ENCODE measurements at regions of chr3 and their contacts with region 1.

Region 1: GRCh38 chr3:133040696-133041523 is 2.7 kb downstream of the TMEM108 start:
- DNase-seq: no peak
- ATAC-seq: no peak
- H3K4me3 Mint-ChIP-seq: no peak overlapping the region
- H3K27ac Mint-ChIP-seq: no peak overlapping the region
- H3K4me1 Mint-ChIP-seq: peaks cover 8% of the 10 kb centered on the region
- H3K27me3 Mint-ChIP-seq: peaks cover 27% of the 10 kb centered on the region
- CTCF ChIP-seq: no peak

Region 2: GRCh38 chr3:131326307-131326706 is 1714.6 kb before region 1 on chr3:
- CTCF ChIA-PET with region 1: no interaction called
- POLR2A ChIA-PET with region 1: no interaction called
- intact Hi-C with region 1: loop called (anchors 5 kb)
- DNase-seq: no peak
- ATAC-seq: no peak
- H3K4me3 Mint-ChIP-seq: no peak overlapping the region
- H3K27ac Mint-ChIP-seq: no peak overlapping the region
- H3K4me1 Mint-ChIP-seq: peaks cover 6% of the 10 kb centered on the region
- H3K27me3 Mint-ChIP-seq: no peaks in the 10 kb centered on the region
- CTCF ChIP-seq: no peak

Region 3: GRCh38 chr3:133384331-133385027 is 343.6 kb after region 1 on chr3:
- CTCF ChIA-PET with region 1: no interaction called
- POLR2A ChIA-PET with region 1: no interaction called
- intact Hi-C with region 1: loop called (anchors 10 kb)
- DNase-seq: peak; percentile 22
- ATAC-seq: peak; percentile 73
- H3K4me3 Mint-ChIP-seq: no peak overlapping the region
- H3K27ac Mint-ChIP-seq: no peak overlapping the region
- H3K4me1 Mint-ChIP-seq: no peaks in the 10 kb centered on the region
- H3K27me3 Mint-ChIP-seq: peaks cover 11% of the 10 kb centered on the region
- CTCF ChIP-seq: no peak

Region 4: DNA sequence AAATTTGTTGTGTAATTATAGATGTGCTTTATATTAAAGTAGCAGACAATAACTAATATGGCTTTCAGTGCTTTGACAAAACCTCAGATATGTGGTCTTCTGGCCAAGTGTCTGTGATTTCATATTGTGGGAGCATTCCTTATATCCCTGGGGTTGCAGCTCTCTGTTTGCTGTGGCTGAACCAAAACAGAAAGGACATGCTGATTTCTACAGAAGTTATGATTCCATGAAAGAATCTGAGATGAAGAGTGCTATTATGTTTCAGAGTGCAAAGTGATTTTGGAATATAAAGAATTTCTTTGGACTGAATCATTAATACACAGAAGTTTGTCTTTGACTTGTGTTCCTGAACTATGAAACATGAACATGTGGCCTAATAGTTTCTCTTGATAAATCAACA is 569.1 kb after region 1 on chr3:
- CTCF ChIA-PET with region 1: no interaction called
- POLR2A ChIA-PET with region 1: no interaction called
- intact Hi-C with region 1: no loop called
- DNase-seq: no peak
- ATAC-seq: no peak
- H3K4me3 Mint-ChIP-seq: no peak overlapping the region
- H3K27ac Mint-ChIP-seq: no peak overlapping the region
- H3K4me1 Mint-ChIP-seq: no peaks in the 10 kb centered on the region
- H3K27me3 Mint-ChIP-seq: no peaks in the 10 kb centered on the region
- CTCF ChIP-seq: no peak